Activated T-helper 1 cell treated with anti-CD3 and anti-CD28 coated beads, Interleukin-12 subunit alpha, Interleukin-12 subunit beta, Interleukin-2, Interleukin-4 antibody, amounts not matched to agents 30 ng/mL and 10 ng/mL and 1 ng/mL, durations not matched to agents 14 hours and 24 hours and 36 hours (primary cell): ENCODE measurements at regions of chr12 and their contacts with region 1.

Region 1: GRCh38 chr12:32679091-32679919 is at the start of gene DNM1L:
- DNase-seq: peak; percentile 90
- H3K4me3 Mint-ChIP-seq: peak within 1 kb of the TSS; percentile 95
- H3K27ac Mint-ChIP-seq: peak within 1 kb of the TSS; percentile 92
- H3K4me1 Mint-ChIP-seq: peaks cover 35% of the 10 kb centered on the region
- H3K27me3 Mint-ChIP-seq: no peaks in the 10 kb centered on the region
- total RNA-seq, gene DNM1L: 87.0 and 91.9 TPM in 2 replicates

Region 2: GRCh38 chr12:32399337-32400113 is 279.8 kb before region 1 on chr12 and contains the start of gene FGD4:
- intact Hi-C with region 1: loop called (anchors 10 kb)
- DNase-seq: peak; percentile 55
- H3K4me3 Mint-ChIP-seq: peak within 1 kb of the TSS; percentile 93
- H3K27ac Mint-ChIP-seq: peak within 1 kb of the TSS; percentile 63
- H3K4me1 Mint-ChIP-seq: peaks cover 13% of the 10 kb centered on the region
- H3K27me3 Mint-ChIP-seq: peaks cover 29% of the 10 kb centered on the region
- total RNA-seq, gene FGD4: 0.03 and 0.51 TPM in 2 replicates

Region 3: DNA sequence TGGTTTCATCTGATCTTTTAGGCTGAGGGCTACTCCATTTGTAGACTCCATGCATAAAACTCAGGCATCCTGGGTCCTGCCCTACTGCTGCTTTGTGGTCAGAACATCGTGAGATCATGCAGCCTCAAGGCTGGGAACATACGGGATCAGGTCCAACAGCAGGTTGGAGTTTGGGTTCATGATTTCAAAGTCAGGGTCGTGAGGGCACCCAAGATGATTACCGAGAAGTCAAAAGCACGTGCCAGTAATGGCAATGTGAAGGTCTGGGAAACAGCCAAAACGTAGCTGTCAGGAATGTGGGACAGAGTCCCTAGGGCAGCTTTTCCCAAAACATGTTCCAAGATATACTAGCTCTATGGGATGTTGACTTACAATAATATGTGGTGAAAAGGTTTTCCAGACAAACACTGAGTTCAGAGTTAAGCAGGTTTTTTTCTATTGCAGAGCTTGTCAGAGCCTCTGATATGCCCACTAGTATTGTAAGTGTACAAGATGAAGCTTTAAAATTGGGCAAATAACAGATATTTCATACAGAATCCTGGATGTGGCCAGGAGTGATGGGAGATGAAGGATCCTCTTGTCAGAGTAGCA is 130.5 kb before region 1 on chr12:
- intact Hi-C with region 1: no loop called
- DNase-seq: no peak
- H3K4me3 Mint-ChIP-seq: no peak overlapping the region
- H3K27ac Mint-ChIP-seq: no peak overlapping the region
- H3K4me1 Mint-ChIP-seq: no peaks in the 10 kb centered on the region
- H3K27me3 Mint-ChIP-seq: peaks cover 2% of the 10 kb centered on the region